CD8-positive, alpha-beta T cell (primary cell): ENCODE measurements at regions of chr5 and their contacts with region 1.

Region 1: GRCh38 chr5:96536991-96537785 is 104.1 kb upstream of the PCSK1 start:
- DNase-seq: peak in 2 of 9 experiments; percentile 73 to 83
- ATAC-seq: peak; percentile 87
- H3K4me3 ChIP-seq: peak overlapping the region in 1 of 2 experiments; percentile 6
- H3K4me3 Mint-ChIP-seq: peak overlapping the region; percentile 46
- H3K27ac ChIP-seq: peak overlapping the region; percentile 10 to 55
- H3K27ac Mint-ChIP-seq: peak overlapping the region; percentile 81
- H3K4me1 ChIP-seq: peaks cover 24% of the 10 kb centered on the region
- H3K4me1 Mint-ChIP-seq: peaks cover 27% of the 10 kb centered on the region
- H3K27me3 ChIP-seq: no peaks in the 10 kb centered on the region
- H3K27me3 Mint-ChIP-seq: no peaks in the 10 kb centered on the region
- CTCF ChIP-seq: no peak

Region 2: GRCh38 chr5:95808686-95809413 is 728.3 kb before region 1 on chr5:
- CTCF ChIA-PET with region 1: no interaction called
- POLR2A ChIA-PET with region 1: no interaction called
- intact Hi-C with region 1: loop called in 1 of 2 experiments (anchors 5 kb)
- DNase-seq: peak; percentile 54 to 95 (median 79)
- ATAC-seq: peak; percentile 99
- H3K4me3 ChIP-seq: peak overlapping the region in 1 of 2 experiments; percentile 9
- H3K4me3 Mint-ChIP-seq: peak overlapping the region; percentile 70
- H3K27ac ChIP-seq: peak overlapping the region; percentile 5 to 61
- H3K27ac Mint-ChIP-seq: peak overlapping the region; percentile 80
- H3K4me1 ChIP-seq: peaks cover 60% of the 10 kb centered on the region
- H3K4me1 Mint-ChIP-seq: peaks cover 58% of the 10 kb centered on the region
- H3K27me3 ChIP-seq: no peaks in the 10 kb centered on the region
- H3K27me3 Mint-ChIP-seq: no peaks in the 10 kb centered on the region
- CTCF ChIP-seq: no peak

Region 3: DNA sequence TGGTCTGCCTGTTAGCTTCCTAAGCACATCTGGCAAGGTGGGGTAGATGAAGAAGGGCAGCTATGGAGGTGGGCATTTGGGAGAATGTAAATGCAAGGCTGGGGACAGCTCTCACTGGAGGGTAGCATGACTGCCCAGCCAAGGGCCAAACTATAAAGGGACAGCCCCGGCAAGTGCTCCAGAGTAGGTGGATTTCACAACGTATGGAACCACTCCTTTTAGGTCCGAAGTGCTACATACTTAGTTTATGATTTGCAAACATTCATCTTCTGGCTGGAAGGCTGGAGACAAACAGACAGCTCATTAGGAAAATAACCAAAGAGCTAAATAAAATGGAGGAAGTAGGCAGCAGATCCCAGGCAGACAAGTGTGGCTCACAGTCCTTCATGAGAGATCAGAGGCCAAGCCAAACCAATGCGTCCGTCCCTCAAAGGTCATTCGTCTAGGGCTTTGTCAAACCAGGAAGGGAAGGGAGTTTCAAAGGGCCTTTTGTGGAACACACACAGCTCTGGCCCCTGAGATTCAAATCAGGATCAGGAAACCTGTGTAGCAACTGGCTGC is 672.2 kb before region 1 on chr5:
- CTCF ChIA-PET with region 1: no interaction called
- POLR2A ChIA-PET with region 1: no interaction called
- intact Hi-C with region 1: loop called (anchors 5 to 10 kb)
- DNase-seq: no peak
- ATAC-seq: no peak
- H3K4me3 ChIP-seq: no peak overlapping the region
- H3K4me3 Mint-ChIP-seq: no peak overlapping the region
- H3K27ac ChIP-seq: no peak overlapping the region
- H3K27ac Mint-ChIP-seq: no peak overlapping the region
- H3K4me1 ChIP-seq: peaks cover 25% of the 10 kb centered on the region
- H3K4me1 Mint-ChIP-seq: peaks cover 35% of the 10 kb centered on the region
- H3K27me3 ChIP-seq: no peaks in the 10 kb centered on the region
- H3K27me3 Mint-ChIP-seq: peaks cover 6% of the 10 kb centered on the region
- CTCF ChIP-seq: no peak

Region 4: GRCh38 chr5:96662725-96663513 is 125.7 kb after region 1 on chr5:
- CTCF ChIA-PET with region 1: no interaction called
- POLR2A ChIA-PET with region 1: no interaction called
- intact Hi-C with region 1: loop called (anchors 2 to 5 kb)
- DNase-seq: peak; percentile 71 to 89 (median 83)
- ATAC-seq: peak; percentile 68
- H3K4me3 ChIP-seq: peak overlapping the region; percentile 54 to 86
- H3K4me3 Mint-ChIP-seq: peak overlapping the region; percentile 94
- H3K27ac ChIP-seq: peak overlapping the region; percentile 72 to 81
- H3K27ac Mint-ChIP-seq: peak overlapping the region; percentile 98
- H3K4me1 ChIP-seq: peaks cover 23% of the 10 kb centered on the region
- H3K4me1 Mint-ChIP-seq: peaks cover 51% of the 10 kb centered on the region
- H3K27me3 ChIP-seq: no peaks in the 10 kb centered on the region
- H3K27me3 Mint-ChIP-seq: no peaks in the 10 kb centered on the region
- CTCF ChIP-seq: no peak

Region 5: DNA sequence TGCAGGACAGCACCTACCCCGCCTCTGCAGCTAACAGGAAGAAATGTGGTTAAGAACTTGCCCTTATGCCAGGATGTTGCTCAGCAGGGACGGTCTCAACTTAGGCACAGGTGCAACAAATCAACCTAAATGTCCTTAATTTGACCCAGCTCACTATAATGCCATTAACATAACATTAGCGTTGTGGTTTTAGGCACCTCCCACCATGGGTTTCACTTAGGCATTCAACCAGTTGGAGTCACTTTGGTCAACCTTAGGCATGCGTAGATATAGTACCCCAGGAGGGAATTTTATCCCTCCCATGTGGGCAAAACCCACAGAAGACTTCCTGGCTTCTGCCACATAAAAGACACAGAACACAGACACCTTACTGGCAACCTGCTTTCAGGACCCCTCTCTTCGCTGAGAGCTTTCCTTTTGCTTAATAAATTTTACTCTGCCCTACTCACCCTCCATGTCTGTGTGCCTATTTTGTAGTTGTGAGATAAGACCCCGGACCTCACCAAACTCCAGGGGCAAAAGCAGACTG is 279.3 kb after region 1 on chr5:
- CTCF ChIA-PET with region 1: no interaction called
- POLR2A ChIA-PET with region 1: no interaction called
- intact Hi-C with region 1: loop called in 1 of 2 experiments (anchors 5 kb)
- DNase-seq: peak; percentile 31 to 94 (median 65)
- ATAC-seq: peak; percentile 86
- H3K4me3 ChIP-seq: peak overlapping the region; percentile 42 to 47
- H3K4me3 Mint-ChIP-seq: peak overlapping the region; percentile 87
- H3K27ac ChIP-seq: peak overlapping the region; percentile 62 to 83
- H3K27ac Mint-ChIP-seq: peak overlapping the region; percentile 95
- H3K4me1 ChIP-seq: peaks cover 49% of the 10 kb centered on the region
- H3K4me1 Mint-ChIP-seq: peaks cover 83% of the 10 kb centered on the region
- H3K27me3 ChIP-seq: no peaks in the 10 kb centered on the region
- H3K27me3 Mint-ChIP-seq: no peaks in the 10 kb centered on the region
- CTCF ChIP-seq: no peak

Region 6: GRCh38 chr5:96829297-96829696 is 292.1 kb after region 1 on chr5:
- CTCF ChIA-PET with region 1: no interaction called
- POLR2A ChIA-PET with region 1: no interaction called
- intact Hi-C with region 1: no loop called
- DNase-seq: no peak
- ATAC-seq: no peak
- H3K4me3 ChIP-seq: no peak overlapping the region
- H3K4me3 Mint-ChIP-seq: no peak overlapping the region
- H3K27ac ChIP-seq: no peak overlapping the region
- H3K27ac Mint-ChIP-seq: no peak overlapping the region
- H3K4me1 ChIP-seq: no peaks in the 10 kb centered on the region
- H3K4me1 Mint-ChIP-seq: peaks cover 4% of the 10 kb centered on the region
- H3K27me3 ChIP-seq: no peaks in the 10 kb centered on the region
- H3K27me3 Mint-ChIP-seq: no peaks in the 10 kb centered on the region
- CTCF ChIP-seq: no peak